Dendritic cell treated with granulocyte-macrophage colony-stimulating factor and Interleukin-4, amounts not matched to agents 40 ng/mL and 50 ng/mL, for 4 days (primary cell): ENCODE measurements at regions of chr3 and their contacts with region 1.

Region 1: GRCh38 chr3:171718493-171719175 is 91.6 kb downstream of the PLD1 start:
- H3K4me3 Mint-ChIP-seq: no peak overlapping the region
- H3K27ac Mint-ChIP-seq: no peak overlapping the region
- H3K4me1 Mint-ChIP-seq: no peaks in the 10 kb centered on the region
- H3K27me3 Mint-ChIP-seq: no peaks in the 10 kb centered on the region

Region 2: GRCh38 chr3:171753665-171754408 is 35.2 kb after region 1 on chr3:
- intact Hi-C with region 1: loop called (anchors 5 kb)
- H3K4me3 Mint-ChIP-seq: no peak overlapping the region
- H3K27ac Mint-ChIP-seq: no peak overlapping the region
- H3K4me1 Mint-ChIP-seq: peaks cover 12% of the 10 kb centered on the region
- H3K27me3 Mint-ChIP-seq: no peaks in the 10 kb centered on the region

Region 3: DNA sequence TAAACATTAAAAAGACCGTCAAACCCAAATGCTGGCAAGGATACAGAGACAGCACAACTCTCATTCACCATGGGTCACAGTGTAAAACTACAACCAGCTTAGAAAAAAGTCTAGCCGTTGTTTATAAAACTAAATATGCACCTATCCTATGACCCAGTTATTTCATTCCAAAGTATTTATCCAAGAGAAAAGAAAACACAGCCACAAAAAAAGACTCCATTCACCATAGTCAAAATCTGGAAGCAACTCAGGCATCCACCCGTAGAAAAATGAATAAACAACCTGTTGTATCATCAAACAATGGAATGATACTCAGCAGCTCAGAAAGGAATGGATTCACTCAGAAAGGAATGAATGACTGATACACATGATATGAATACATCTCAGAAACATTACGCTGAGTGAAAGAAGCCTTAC is 63.1 kb after region 1 on chr3:
- intact Hi-C with region 1: no loop called
- H3K4me3 Mint-ChIP-seq: no peak overlapping the region
- H3K27ac Mint-ChIP-seq: no peak overlapping the region
- H3K4me1 Mint-ChIP-seq: peaks cover 15% of the 10 kb centered on the region
- H3K27me3 Mint-ChIP-seq: no peaks in the 10 kb centered on the region